ENCODE measurements at regions of chr2 and their contacts with region 1.

Region 1: GRCh38 chr2:84302513-84303412 is 156.3 kb downstream of the SUCLG1 start:
- DNase-seq: peak; percentile 33 to 64 (median 55)
- H3K4me3 ChIP-seq: no peak overlapping the region
- H3K27ac ChIP-seq: no peak overlapping the region
- H3K4me1 ChIP-seq: no peaks in the 10 kb centered on the region
- H3K27me3 ChIP-seq: no peaks in the 10 kb centered on the region

Region 2: DNA sequence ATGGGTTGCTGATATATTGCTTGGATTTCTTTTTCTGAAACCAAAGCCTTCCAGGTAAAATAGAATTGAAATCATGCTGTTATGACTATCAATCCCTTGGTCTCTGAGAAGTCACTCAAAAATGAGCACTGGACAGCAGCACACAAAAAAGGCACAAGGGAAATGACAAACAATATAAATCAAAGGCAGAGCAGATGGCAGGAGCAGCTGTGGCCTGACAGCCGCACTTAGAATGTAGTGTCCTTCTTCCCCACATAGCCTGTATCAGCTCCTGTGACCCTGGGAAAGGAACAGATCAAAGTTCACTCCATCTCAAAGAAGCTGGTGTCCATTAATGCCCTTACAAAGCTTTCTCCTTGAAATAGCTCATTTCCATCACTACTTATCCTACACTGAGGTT is 170.4 kb before region 1 on chr2:
- CTCF ChIA-PET with region 1: no interaction called
- POLR2A ChIA-PET with region 1: no interaction called
- DNase-seq: no peak
- H3K4me3 ChIP-seq: no peak overlapping the region
- H3K27ac ChIP-seq: no peak overlapping the region
- H3K4me1 ChIP-seq: peaks cover 0 to 6% (median 0%) of the 10 kb centered on the region in 4 experiments
- H3K27me3 ChIP-seq: no peaks in the 10 kb centered on the region

Region 3: GRCh38 chr2:84314901-84315330 is 12.2 kb after region 1 on chr2:
- CTCF ChIA-PET with region 1: interaction called, 30 read pairs
- POLR2A ChIA-PET with region 1: no interaction called
- DNase-seq: peak; percentile 74 to 85 (median 77)
- H3K4me3 ChIP-seq: no peak overlapping the region
- H3K27ac ChIP-seq: no peak overlapping the region
- H3K4me1 ChIP-seq: no peaks in the 10 kb centered on the region
- H3K27me3 ChIP-seq: peaks cover 0 to 5% (median 0%) of the 10 kb centered on the region in 5 experiments

Measured in common myeloid progenitor, CD34-positive (primary cell).